ENCODE measurements at regions of chr14 and their contacts with region 1.

Region 1: DNA sequence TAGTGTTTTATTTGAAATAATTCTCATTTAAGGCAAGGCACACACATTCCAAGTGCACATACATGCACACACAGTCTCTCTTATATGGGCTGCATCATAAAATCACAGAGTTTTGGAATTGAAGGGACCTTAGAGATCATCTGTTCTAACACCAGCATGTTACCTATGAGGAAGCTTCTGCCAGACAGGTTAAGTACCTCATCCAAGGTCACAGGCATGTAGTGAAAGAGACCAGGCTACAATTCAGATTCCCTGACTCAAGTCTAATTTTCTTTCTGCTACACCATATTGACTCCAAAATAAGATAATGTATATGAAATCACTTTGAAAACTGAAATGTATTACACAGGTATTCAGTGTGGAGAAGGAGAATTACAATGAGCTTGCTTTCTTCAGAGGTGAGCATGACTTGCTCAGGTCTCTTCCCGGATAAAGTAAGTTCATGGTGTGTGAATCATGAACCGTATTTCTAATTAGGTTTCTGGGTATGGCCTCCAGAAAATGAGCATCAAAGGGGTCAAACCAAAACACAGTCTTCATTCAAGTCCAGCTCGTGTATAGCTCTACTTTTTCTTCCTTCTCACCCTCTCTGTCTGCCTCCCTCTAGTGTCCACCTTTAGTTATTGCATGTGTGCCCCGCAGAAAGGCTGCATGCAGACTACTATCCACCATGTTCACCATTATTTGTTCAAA is 411.9 kb downstream of the FUT8 start:
- DNase-seq: peak; percentile 57
- H3K4me3 ChIP-seq: no peak overlapping the region
- H3K27ac ChIP-seq: no peak overlapping the region
- H3K4me1 ChIP-seq: no peaks in the 10 kb centered on the region
- H3K27me3 ChIP-seq: no peaks in the 10 kb centered on the region
- CTCF ChIP-seq: peak; percentile 77 to 96 (median 89)
- POLR2A ChIP-seq: no peak

Region 2: GRCh38 chr14:65164068-65164824 is 660.2 kb before region 1 on chr14:
- intact Hi-C with region 1: loop called (anchors 10 kb)
- DNase-seq: no peak
- H3K4me3 ChIP-seq: no peak overlapping the region
- H3K27ac ChIP-seq: no peak overlapping the region
- H3K4me1 ChIP-seq: no peaks in the 10 kb centered on the region
- H3K27me3 ChIP-seq: no peaks in the 10 kb centered on the region
- CTCF ChIP-seq: peak; percentile 45 to 66 (median 61)
- POLR2A ChIP-seq: no peak

Region 3: GRCh38 chr14:65412032-65412846 is 412.2 kb before region 1 on chr14 and contains the start of gene FUT8:
- intact Hi-C with region 1: loop called (anchors 10 kb)
- DNase-seq: peak; percentile 95
- H3K4me3 ChIP-seq: peak within 1 kb of the TSS; percentile 79 to 94
- H3K27ac ChIP-seq: peak within 1 kb of the TSS; percentile 94 to 96
- H3K4me1 ChIP-seq: no peaks in the 10 kb centered on the region
- H3K27me3 ChIP-seq: no peaks in the 10 kb centered on the region
- CTCF ChIP-seq: peak; percentile 39 to 51 (median 49)
- POLR2A ChIP-seq: peak; percentile 27
- total RNA-seq, gene FUT8: 58.7 to 68.3 TPM

Region 4: DNA sequence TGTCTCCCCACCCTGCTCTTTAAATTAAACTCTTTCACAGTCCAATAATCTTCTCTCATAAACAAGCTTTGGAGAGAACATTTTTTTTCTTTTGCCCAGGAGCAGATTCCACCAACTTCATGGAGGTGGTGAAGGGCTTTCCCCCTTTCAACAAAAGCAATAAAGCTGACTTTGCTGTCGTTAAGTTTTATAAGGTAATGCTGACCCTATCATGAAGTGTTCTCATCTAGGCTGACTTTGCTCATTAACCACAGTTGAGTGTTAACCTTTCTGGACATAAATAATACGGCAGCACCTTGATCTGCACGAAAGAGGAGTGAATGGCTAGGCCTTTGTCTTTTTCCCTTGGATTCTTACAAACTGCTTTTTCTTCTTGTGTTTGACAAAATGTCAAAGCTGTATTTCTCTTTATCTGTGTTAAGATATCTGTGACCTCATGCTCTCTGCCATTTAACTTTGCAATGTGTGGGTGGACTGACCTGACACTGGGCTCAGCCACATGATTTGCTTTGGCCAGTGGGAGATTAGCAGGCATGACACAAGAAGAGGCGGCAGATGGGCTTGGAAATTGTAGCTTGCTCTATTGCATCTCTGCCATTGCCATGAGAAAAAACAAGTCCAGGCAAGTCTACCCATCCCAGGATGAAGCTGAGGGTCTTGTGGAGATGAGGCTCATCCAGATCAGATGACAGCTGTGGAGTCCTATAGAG is 190.8 kb after region 1 on chr14:
- intact Hi-C with region 1: no loop called
- DNase-seq: no peak
- H3K4me3 ChIP-seq: no peak overlapping the region
- H3K27ac ChIP-seq: no peak overlapping the region
- H3K4me1 ChIP-seq: no peaks in the 10 kb centered on the region
- H3K27me3 ChIP-seq: no peaks in the 10 kb centered on the region
- CTCF ChIP-seq: no peak
- POLR2A ChIP-seq: no peak

Measured in testis (tissue), 5 donors.